ENCODE measurements at regions of chr20 and their contacts with region 1.

Region 1: DNA sequence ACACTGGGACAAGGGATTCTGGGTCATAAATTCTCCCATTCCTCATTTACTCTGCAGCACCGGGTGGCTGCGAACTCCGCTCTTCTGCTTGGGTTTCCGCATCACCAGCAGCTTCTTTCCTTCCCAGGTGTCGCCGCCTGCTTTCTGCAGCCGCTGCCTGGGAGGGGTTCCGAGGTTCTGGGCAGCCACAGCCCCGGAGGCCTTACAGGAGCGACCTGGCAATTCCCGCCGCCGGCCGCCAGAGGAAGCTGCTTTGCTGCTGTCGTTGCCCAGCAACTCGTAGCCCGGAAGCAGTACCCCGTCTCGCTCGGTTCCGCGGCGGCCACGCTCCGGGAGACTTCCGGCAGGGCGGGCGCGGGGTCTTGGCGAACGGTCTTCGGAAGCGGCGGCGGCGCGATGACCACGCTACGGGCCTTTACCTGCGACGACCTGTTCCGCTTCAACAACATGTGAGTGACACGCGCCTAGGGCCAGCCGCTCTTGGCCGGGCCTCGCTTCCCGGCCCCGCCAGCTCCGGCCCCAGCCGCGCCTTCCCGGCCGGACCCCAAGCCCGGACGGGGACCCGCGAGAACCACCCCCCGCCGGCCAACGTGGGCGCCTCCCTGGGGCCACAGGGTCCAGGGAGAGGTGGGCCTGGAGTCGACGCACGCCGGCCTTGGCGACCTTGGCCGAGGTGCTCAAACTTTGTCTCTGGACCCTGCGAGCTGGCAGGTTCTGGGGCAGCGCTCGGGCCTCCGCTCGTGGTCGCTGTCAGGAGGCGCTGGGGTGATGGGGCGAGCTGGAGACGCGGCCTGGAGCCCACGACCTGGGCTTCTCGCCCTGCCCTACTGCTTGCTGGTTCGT is at the start of gene NAA20:
- DNase-seq: peak; percentile 91
- H3K4me3 Mint-ChIP-seq: peak within 1 kb of the TSS; percentile 73
- H3K27ac Mint-ChIP-seq: peak within 1 kb of the TSS; percentile 95
- H3K4me1 Mint-ChIP-seq: peaks cover 41% of the 10 kb centered on the region
- H3K27me3 Mint-ChIP-seq: no peaks in the 10 kb centered on the region
- CTCF ChIP-seq: peak; percentile 71
- total RNA-seq, gene NAA20: 109 and 126 TPM in 2 replicates

Region 2: DNA sequence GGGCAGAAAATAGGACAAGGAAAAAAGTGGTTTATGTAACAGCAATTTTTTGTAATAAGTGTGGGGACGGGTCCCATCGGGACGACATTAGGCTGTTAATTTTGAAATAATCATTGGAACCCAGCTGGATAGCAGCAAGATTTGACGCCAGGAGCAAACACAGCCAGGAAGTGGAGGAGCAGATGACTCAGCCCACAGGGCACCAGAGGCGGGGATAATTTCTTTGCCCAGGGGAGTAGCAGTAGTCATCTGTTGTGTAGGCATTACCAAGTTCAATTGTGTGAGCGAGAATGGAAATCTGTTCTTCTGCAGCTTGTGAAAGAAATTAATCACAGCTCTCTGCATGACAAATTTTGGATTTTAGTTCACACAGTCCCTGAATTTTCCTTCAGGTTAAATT is 281.8 kb before region 1 on chr20:
- CTCF ChIA-PET with region 1: no interaction called
- POLR2A ChIA-PET with region 1: interaction called, 14 read pairs
- intact Hi-C with region 1: no loop called
- DNase-seq: peak; percentile 96
- H3K4me3 Mint-ChIP-seq: peak overlapping the region; percentile 27
- H3K27ac Mint-ChIP-seq: peak overlapping the region; percentile 87
- H3K4me1 Mint-ChIP-seq: peaks cover 25% of the 10 kb centered on the region
- H3K27me3 Mint-ChIP-seq: no peaks in the 10 kb centered on the region
- CTCF ChIP-seq: no peak

Region 3: GRCh38 chr20:19913927-19914614 is 103.2 kb before region 1 on chr20:
- CTCF ChIA-PET with region 1: interaction called, 3 read pairs
- POLR2A ChIA-PET with region 1: interaction called, 10 read pairs
- intact Hi-C with region 1: no loop called
- DNase-seq: peak; percentile 94
- H3K4me3 Mint-ChIP-seq: no peak overlapping the region
- H3K27ac Mint-ChIP-seq: peak overlapping the region; percentile 82
- H3K4me1 Mint-ChIP-seq: peaks cover 46% of the 10 kb centered on the region
- H3K27me3 Mint-ChIP-seq: no peaks in the 10 kb centered on the region
- CTCF ChIP-seq: no peak

Region 4: DNA sequence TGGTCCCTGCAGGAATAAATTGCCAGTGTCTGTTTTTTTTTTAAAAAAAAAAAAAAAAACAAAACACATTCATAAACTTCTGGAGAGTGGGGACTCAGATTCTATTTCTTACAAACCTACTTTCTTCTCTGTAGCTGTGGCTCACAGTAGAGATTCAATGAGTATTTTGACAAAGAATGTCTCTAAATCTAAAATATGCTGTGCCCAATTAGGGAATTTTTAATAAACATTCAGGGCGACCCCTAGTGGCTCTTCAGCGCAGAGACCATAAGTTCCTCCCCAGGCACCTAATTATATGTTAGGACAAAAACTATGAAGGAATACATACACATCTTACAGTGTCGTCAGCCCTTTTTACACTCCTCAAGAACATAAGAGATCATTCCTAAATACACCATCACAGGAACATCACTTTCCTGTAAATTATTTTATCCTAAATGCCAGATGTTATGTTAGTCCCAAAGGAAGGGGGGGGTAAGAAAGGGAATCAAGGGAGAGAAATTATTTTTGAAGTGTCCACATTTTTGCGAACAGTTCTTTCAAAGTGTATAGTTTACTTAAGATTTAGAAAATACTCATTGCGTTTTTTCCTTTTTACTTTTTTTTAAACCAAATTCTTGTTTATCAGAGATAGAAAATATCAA is 21.9 kb before region 1 on chr20:
- CTCF ChIA-PET with region 1: interaction called, 8 read pairs
- POLR2A ChIA-PET with region 1: interaction called, 47 read pairs
- intact Hi-C with region 1: no loop called
- DNase-seq: peak; percentile 70
- H3K4me3 Mint-ChIP-seq: no peak overlapping the region
- H3K27ac Mint-ChIP-seq: peak overlapping the region; percentile 86
- H3K4me1 Mint-ChIP-seq: peaks cover 28% of the 10 kb centered on the region
- H3K27me3 Mint-ChIP-seq: no peaks in the 10 kb centered on the region
- CTCF ChIP-seq: peak; percentile 78

Region 5: DNA sequence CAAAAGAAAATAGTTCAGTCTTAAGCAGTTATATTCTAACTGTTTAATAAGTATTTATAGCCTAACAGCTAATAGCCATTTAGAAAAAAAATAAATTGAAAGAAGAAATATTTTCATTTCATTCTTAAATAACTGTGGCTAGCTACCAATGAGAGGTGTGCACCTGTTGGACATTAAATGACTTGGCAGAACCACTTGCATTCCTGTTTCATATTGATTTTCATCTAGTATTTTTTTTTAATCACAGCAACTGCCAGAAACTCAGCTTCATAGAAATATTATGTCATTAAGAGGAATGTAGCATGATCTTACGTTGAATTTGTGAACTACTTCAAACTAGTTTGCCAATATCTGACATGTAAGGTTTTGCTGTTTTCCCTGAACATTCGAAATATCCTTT is 10.1 kb after region 1 on chr20:
- CTCF ChIA-PET with region 1: interaction called, 7 read pairs
- POLR2A ChIA-PET with region 1: interaction called, 43 read pairs
- intact Hi-C with region 1: no loop called
- DNase-seq: no peak
- H3K4me3 Mint-ChIP-seq: no peak overlapping the region
- H3K27ac Mint-ChIP-seq: peak overlapping the region; percentile 12
- H3K4me1 Mint-ChIP-seq: no peaks in the 10 kb centered on the region
- H3K27me3 Mint-ChIP-seq: no peaks in the 10 kb centered on the region
- CTCF ChIP-seq: no peak

Region 6: DNA sequence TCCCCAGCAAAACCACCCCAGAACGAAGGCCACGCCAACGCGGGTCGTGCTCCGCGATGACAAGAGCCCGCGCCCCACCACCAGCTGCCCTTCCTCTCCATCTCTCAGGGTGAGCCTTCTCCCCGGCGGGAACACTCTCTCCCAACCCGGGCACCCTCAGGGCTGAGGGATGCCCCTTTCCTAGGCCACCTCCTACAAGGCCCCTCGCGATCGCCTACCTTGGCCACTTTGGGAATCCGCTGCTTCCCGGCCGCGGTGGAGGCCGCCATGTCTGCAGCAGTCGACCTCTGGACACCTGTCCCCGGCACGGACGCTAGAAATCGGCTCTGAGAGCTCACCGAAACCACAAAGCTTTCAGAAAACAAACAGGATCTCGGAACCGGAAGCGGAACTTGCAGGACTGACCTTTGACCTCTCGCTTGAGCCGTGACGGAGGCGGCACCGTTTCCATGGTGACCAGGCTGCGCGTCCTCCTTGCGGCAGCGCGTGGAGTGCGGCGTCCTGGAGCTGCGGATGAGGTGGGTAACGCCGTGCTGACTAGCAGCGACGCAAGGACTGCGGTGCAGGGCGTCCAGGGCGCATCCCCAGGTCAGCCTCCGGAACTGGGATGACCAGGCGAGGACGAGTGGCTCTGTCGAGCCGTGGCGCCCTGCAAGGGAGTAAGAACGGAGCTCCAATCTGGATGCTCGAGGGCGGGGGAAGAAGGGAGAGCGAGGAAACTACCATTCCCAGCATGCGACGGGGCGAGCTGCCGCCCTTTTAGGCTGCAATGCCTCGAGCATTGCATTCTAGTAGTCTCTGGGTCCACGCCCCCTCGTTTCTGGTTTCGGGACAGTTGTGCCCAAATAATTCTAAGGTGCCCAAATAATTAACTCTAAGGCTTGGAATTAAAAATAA is 35.1 kb after region 1 on chr20 and contains the starts of genes CFAP61 and CRNKL1:
- CTCF ChIA-PET with region 1: interaction called, 7 read pairs
- POLR2A ChIA-PET with region 1: interaction called, 67 read pairs
- intact Hi-C with region 1: no loop called
- DNase-seq: peak; percentile 96
- H3K4me3 Mint-ChIP-seq: peak within 1 kb of the TSS; percentile 97
- H3K27ac Mint-ChIP-seq: peak within 1 kb of the TSS; percentile 96
- H3K4me1 Mint-ChIP-seq: peaks cover 10% of the 10 kb centered on the region
- H3K27me3 Mint-ChIP-seq: no peaks in the 10 kb centered on the region
- CTCF ChIP-seq: no peak
- total RNA-seq, gene CFAP61: 1.4 and 1.5 TPM in 2 replicates
- total RNA-seq, gene CRNKL1: 19.4 and 20.1 TPM in 2 replicates

Region 7: DNA sequence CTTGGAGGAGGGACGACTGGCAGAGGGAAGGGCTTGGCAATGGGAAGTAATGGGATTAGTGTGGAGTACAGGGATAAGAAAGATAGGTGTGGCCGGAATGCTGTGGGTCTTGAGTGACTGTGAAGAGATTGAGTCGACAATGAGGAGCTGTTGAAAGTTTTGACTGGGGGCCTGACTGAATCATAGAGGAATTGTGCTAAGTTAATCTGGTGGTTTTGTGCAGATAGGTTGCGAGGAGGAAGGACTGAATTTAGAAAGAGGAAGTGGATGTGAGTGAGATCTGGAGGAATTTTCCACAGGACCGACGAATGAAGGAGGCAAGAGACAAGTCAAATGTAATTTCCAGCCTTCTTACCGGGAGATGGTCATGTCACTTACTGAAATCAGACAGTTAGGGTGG is 839.1 kb after region 1 on chr20:
- CTCF ChIA-PET with region 1: no interaction called
- POLR2A ChIA-PET with region 1: no interaction called
- intact Hi-C with region 1: no loop called
- DNase-seq: no peak
- H3K4me3 Mint-ChIP-seq: no peak overlapping the region
- H3K27ac Mint-ChIP-seq: no peak overlapping the region
- H3K4me1 Mint-ChIP-seq: peaks cover 9% of the 10 kb centered on the region
- H3K27me3 Mint-ChIP-seq: no peaks in the 10 kb centered on the region
- CTCF ChIP-seq: no peak

Measured in MCF 10A (cell line).